ENCODE measurements at regions of chr17 and their contacts with region 1.

Region 1: DNA sequence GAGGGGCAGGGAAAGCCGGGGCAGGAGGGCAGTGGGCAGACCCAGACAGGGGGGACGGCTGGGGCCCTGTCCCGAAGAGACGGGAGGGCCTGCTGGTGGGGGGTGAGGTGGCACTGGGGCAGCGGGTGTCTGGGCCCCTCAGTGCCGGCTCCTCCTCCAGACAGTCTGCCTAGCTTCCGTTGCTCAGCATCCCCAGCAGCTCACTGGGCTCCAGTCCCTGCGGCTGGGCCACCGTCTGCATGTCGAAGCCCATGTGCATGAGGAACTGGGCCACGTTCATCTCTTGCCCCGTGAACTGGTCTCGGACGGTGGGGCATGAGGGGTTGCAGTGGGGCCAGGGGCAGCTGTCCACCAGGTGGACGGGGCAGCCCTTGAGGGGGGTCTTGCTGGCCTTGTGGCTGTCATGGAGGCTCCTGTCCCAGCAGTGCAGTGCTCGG is 5.8 kb upstream of the MYADML2 start:
- H3K4me3 ChIP-seq: no peak overlapping the region
- H3K27ac ChIP-seq: no peak overlapping the region
- H3K4me1 ChIP-seq: no peaks in the 10 kb centered on the region
- CTCF ChIP-seq: no peak

Region 2: DNA sequence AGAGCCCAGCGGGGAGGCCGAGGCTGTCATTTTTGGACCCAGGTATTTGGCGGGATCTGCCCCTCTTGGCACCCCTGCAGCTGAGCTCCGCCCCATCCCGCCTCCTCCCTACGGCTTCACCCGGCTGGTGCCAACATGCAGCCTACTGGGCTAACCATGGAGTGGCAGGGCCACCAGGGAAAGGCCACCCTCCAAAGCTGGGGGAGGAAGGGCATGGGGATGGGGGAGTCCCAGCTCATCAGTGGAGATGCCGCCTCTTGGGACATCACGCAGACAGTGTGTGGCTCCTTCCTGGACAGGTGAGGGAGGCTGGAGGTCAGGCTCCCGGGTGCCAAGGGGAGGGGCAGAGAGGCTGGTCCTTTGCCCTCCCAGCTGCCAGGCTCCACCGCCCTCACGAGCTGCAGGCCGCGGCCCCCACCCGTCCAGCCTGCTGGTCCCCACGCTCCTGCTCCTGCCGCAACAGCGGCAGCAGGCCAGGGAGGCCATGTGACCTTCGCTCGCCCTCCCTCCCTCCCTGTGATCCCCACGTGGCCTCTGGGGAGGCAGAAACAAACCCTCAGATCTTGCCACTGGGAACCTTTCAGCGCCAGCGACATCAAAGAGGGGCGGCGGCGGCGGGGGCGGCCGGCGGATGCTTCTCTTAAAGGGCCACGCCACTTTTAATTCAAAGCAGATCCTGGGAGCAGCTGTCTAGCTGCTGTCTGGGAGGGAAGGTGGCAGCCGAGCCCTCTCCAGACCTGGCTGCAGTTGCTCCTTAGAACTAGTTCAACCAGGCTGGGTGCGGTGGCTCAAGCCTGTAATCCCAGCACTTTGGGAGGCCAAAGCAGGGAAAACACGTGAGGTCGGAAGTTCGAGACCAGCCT is 15.0 kb after region 1 on chr17:
- CTCF ChIA-PET with region 1: no interaction called
- POLR2A ChIA-PET with region 1: interaction called, 10 read pairs
- H3K4me3 ChIP-seq: no peak overlapping the region
- H3K27ac ChIP-seq: no peak overlapping the region
- H3K4me1 ChIP-seq: no peaks in the 10 kb centered on the region
- CTCF ChIP-seq: no peak